CD4-positive, alpha-beta T cell (primary cell): ENCODE measurements at regions of chr3 and their contacts with region 1.

Region 1: DNA sequence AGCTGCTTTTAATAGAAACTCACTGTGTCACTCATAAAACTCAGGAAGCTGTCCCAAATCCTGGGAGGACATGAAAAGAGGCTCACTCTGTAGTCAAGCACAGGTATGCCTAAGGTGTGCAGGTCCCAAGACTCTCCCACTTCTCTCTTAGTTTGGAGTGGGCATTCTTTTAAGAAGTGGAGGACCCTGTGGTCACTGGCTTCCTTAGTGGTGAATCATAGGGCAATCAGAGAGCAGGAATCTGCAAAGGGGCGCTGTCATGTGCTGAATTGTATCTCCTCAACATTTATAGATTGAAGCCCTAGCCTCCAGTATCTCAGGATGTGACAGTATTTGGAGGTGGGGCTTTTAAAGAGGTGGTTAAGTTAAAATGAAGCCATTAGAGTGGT is 47.2 kb upstream of the ZBTB38 start:
- DNase-seq: peak in 1 of 14 experiments; percentile 18
- ATAC-seq: peak; percentile 34
- H3K4me3 ChIP-seq: no peak overlapping the region
- H3K4me3 Mint-ChIP-seq: peak overlapping the region; percentile 66
- H3K27ac ChIP-seq: peak overlapping the region; percentile 14 to 50
- H3K27ac Mint-ChIP-seq: peak overlapping the region; percentile 75
- H3K4me1 ChIP-seq: peaks cover 16% of the 10 kb centered on the region
- H3K4me1 Mint-ChIP-seq: peaks cover 30% of the 10 kb centered on the region
- H3K27me3 ChIP-seq: no peaks in the 10 kb centered on the region
- H3K27me3 Mint-ChIP-seq: no peaks in the 10 kb centered on the region
- CTCF ChIP-seq: no peak

Region 2: DNA sequence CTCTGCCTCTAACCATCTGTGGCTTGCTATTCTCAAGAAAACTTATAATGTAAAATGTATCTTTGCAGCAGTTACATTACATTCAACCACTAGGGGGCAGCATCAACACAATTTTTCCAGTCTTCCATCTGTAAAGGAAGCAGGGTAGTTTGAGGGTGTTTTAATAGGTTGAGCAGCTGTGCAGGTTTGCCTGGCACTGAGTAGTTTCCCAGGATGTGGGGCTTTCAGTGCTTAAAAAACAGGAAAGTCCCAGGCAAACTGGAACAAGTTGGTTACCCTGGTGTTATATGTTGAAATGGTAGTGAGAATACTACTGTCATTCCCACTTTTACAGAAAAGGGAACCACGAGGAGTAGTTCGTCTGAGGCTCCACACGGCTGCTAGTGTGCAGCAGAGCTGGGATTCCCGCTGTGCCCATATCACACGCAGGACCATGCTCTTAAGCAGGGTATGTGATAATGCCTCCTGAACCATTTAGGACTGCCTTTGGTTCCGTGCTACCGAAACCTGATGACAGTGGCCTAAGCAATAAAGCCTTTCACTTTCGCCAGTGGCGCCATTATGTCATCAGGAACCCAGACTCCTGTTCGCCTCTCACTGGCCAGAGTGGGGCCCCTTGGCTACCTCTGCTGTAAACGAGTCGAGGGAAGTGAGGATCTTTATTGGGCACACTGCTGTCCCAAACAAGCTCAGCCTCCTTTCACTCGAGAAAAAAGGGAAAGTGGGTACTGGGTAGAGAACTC is 17.5 kb before region 1 on chr3:
- CTCF ChIA-PET with region 1: no interaction called
- POLR2A ChIA-PET with region 1: interaction called, 12 read pairs
- intact Hi-C with region 1: no loop called
- DNase-seq: peak in 11 of 14 experiments; percentile 16 to 89 (median 60)
- ATAC-seq: peak; percentile 43
- H3K4me3 ChIP-seq: no peak overlapping the region
- H3K4me3 Mint-ChIP-seq: no peak overlapping the region
- H3K27ac ChIP-seq: no peak overlapping the region
- H3K27ac Mint-ChIP-seq: no peak overlapping the region
- H3K4me1 ChIP-seq: peaks cover 61% of the 10 kb centered on the region
- H3K4me1 Mint-ChIP-seq: peaks cover 81% of the 10 kb centered on the region
- H3K27me3 ChIP-seq: no peaks in the 10 kb centered on the region
- H3K27me3 Mint-ChIP-seq: no peaks in the 10 kb centered on the region
- CTCF ChIP-seq: peak; percentile 80